A673 (cell line): ENCODE measurements at regions of chr4 and their contacts with region 1.

Region 1: DNA sequence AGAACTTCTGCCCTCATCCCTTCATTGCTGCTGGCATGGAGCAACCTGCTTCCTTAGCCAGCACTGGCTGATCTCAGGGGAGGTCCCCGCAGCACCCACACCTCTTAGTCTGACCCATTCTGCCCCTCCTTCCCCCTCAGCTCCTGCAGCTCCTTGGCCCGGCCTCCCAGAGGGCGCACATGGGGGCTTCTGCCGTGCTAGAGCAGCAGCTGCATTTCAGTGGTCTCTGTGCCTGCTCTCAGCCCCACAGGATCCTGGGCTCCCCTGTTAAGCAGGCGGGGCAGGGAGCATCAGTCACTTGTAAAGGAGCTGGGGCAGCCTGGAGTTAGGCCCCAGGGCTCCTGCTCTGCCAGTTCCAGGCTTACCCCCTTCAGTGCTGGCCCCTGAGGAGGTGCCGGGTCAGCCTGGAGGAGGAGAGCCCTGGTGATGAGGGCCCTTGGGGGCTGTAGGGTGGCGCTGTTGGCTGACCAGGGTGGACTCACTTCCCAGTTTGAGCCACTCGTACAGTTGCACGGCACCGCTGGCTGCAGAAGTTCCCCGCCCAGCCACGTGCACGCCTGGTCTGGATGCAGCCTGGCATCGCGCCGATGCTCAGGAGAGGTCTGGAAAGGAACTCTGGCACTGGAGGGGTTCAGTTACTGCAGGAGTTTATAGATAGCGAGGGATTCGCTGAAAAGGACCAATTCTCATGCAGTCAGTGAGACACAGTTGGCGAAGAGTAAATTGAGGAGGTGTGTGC is 85.1 kb upstream of the PSAPL1 start:
- DNase-seq: no peak
- H3K4me3 ChIP-seq: no peak overlapping the region
- H3K27ac ChIP-seq: no peak overlapping the region
- H3K4me1 ChIP-seq: no peaks in the 10 kb centered on the region
- H3K27me3 ChIP-seq: peaks cover 66% of the 10 kb centered on the region
- CTCF ChIP-seq: no peak

Region 2: GRCh38 chr4:7600247-7600646 is 80.4 kb after region 1 on chr4:
- CTCF ChIA-PET with region 1: no interaction called
- POLR2A ChIA-PET with region 1: interaction called, 14 read pairs
- intact Hi-C with region 1: no loop called
- DNase-seq: no peak
- H3K4me3 ChIP-seq: no peak overlapping the region
- H3K27ac ChIP-seq: no peak overlapping the region
- H3K4me1 ChIP-seq: no peaks in the 10 kb centered on the region
- H3K27me3 ChIP-seq: peaks cover 22% of the 10 kb centered on the region
- CTCF ChIP-seq: no peak